H1 (cell line): ENCODE measurements at regions of chr4 and their contacts with region 1.

Region 1: DNA sequence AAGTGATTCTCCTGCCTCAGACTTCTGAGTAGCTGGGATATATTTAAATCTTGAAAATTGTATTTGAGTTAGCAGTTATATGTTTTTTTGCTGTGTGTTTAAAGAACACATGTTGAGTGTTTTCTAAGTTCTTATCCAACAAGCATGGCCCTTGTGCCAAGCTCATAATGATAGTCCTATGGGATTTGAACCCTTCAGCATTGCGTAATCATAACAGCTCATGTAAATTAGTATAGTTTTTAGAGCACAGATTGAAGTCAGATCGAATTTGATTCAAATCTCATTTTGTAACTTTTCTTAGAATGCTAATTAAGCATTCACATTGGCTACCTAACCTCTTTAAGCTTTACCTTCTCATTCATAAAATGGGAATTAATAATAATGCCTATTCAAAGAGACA is 12.2 kb downstream of the FAM149A start:
- DNase-seq: no peak
- H3K4me3 ChIP-seq: no peak overlapping the region
- H3K27ac ChIP-seq: no peak overlapping the region
- H3K4me1 ChIP-seq: peaks cover 0 to 5% (median 0%) of the 10 kb centered on the region in 4 experiments; a peak in 3 of 7 replicates
- H3K27me3 ChIP-seq: no peaks in the 10 kb centered on the region
- CTCF ChIP-seq: no peak
- EP300 ChIP-seq: no peak
- POLR2A ChIP-seq: no peak
- RAD21 ChIP-seq: no peak

Region 2: GRCh38 chr4:186128842-186129241 is 12.1 kb after region 1 on chr4:
- CTCF ChIA-PET with region 1: interaction called, 10 read pairs
- POLR2A ChIA-PET with region 1: no interaction called
- DNase-seq: no peak
- H3K4me3 ChIP-seq: no peak overlapping the region
- H3K27ac ChIP-seq: no peak overlapping the region
- H3K4me1 ChIP-seq: peaks cover 4 to 12% (median 8%) of the 10 kb centered on the region in 4 experiments; a peak in 6 of 7 replicates
- H3K27me3 ChIP-seq: no peaks in the 10 kb centered on the region
- CTCF ChIP-seq: no peak
- EP300 ChIP-seq: no peak
- POLR2A ChIP-seq: no peak
- RAD21 ChIP-seq: no peak

Region 3: GRCh38 chr4:186651624-186652023 is 534.9 kb after region 1 on chr4:
- CTCF ChIA-PET with region 1: no interaction called
- POLR2A ChIA-PET with region 1: no interaction called
- DNase-seq: no peak
- H3K4me3 ChIP-seq: no peak overlapping the region
- H3K27ac ChIP-seq: no peak overlapping the region
- H3K4me1 ChIP-seq: peaks cover 0 to 21% (median 12%) of the 10 kb centered on the region in 4 experiments; a peak in 3 of 7 replicates
- H3K27me3 ChIP-seq: no peaks in the 10 kb centered on the region
- CTCF ChIP-seq: no peak
- EP300 ChIP-seq: no peak
- POLR2A ChIP-seq: no peak
- RAD21 ChIP-seq: no peak